OCI-LY7 (cell line): ENCODE measurements at regions of chr11 and their contacts with region 1.

Region 1: GRCh38 chr11:16173798-16174197 is 182.5 kb downstream of the SOX6 start:
- DNase-seq: no peak
- H3K4me3 ChIP-seq: no peak overlapping the region
- H3K27ac ChIP-seq: no peak overlapping the region
- H3K4me1 ChIP-seq: no peaks in the 10 kb centered on the region
- CTCF ChIP-seq: no peak

Region 2: DNA sequence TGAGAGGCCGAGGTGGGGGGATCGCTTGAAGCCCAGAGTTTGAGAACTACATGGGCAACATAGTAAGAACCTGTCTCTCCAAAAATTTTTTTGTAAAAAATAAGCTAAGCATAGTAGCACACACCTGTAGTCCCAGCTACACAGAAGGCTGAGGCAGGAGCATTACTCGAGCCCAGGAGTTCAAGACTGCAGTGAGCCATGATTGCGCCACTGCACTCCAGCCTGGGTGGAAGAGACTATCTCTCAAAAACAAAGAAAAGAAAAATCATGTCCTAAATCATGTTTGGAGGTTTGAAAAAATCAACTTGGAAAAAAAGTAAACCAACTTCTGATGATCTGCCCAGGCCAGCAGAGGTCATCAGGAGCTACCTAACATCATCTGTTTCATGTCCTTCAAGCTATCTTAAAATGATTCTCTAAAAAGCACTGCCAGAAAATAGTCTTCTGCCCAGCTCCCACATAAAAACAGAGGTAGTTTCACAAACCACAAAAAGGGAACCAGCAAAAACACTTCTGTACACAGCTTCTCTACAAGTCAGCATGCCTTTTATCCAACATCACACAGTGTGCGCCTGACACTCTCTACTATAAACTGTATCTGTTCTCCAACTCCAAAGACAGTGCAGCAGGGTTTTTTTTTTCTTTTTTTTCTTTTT is 17.5 kb after region 1 on chr11:
- CTCF ChIA-PET with region 1: no interaction called
- POLR2A ChIA-PET with region 1: interaction called, 11 read pairs
- intact Hi-C with region 1: no loop called
- DNase-seq: peak; percentile 60
- H3K4me3 ChIP-seq: peak overlapping the region; percentile 26
- H3K27ac ChIP-seq: peak overlapping the region; percentile 74
- H3K4me1 ChIP-seq: peaks cover 35% of the 10 kb centered on the region
- CTCF ChIP-seq: peak; percentile 65

Region 3: DNA sequence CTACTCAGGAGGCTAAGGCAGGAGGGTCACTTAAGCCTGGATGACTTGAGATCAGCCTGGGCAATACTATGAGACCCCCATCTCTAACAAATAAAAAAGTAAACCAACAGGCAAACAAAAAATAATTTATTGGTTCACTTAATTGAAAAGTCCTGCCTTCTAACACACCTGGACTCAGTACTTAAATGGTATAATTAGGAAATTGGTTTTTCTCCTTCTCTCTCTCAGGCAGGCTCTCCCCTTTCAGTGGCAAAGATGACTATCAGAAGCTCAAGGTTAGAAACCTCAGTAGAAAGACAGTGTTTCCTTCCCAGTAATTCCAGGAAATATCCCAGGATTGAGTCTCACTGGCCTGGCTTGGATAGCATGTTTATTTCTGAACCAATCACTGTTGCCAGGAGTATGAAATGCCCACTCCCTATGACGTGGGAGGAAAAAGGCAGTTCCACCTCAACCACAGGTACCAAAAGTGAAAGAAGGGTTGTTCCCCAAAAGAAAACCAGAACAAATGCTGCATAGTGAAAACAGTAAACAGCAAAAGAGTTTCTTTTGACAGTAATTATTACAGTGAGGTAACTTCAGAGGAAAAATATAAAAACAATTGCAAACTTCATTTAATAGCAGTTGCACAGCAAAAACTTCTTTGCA is 238.9 kb after region 1 on chr11:
- CTCF ChIA-PET with region 1: no interaction called
- POLR2A ChIA-PET with region 1: no interaction called
- intact Hi-C with region 1: no loop called
- DNase-seq: no peak
- H3K4me3 ChIP-seq: no peak overlapping the region
- H3K27ac ChIP-seq: no peak overlapping the region
- H3K4me1 ChIP-seq: no peaks in the 10 kb centered on the region
- CTCF ChIP-seq: no peak